WTC11 (cell line): ENCODE measurements at regions of chr6 and their contacts with region 1.

Region 1: GRCh38 chr6:12911387-12911960 is 194.9 kb downstream of the PHACTR1 start:
- DNase-seq: no peak
- ATAC-seq: no peak; the same call in 1 of the 2 replicates
- H3K4me3 Mint-ChIP-seq: no peak overlapping the region
- H3K27ac Mint-ChIP-seq: no peak overlapping the region
- H3K4me1 Mint-ChIP-seq: peaks cover 26% of the 10 kb centered on the region
- H3K27me3 Mint-ChIP-seq: no peaks in the 10 kb centered on the region
- CTCF ChIP-seq: no peak

Region 2: GRCh38 chr6:12637960-12638641 is 273.4 kb before region 1 on chr6:
- CTCF ChIA-PET with region 1: interaction called, 15 read pairs
- POLR2A ChIA-PET with region 1: no interaction called
- DNase-seq: peak; percentile 79
- ATAC-seq: peak; percentile 93
- H3K4me3 Mint-ChIP-seq: no peak overlapping the region
- H3K27ac Mint-ChIP-seq: no peak overlapping the region
- H3K4me1 Mint-ChIP-seq: peaks cover 3% of the 10 kb centered on the region; the same call in 1 of the 2 replicates
- H3K27me3 Mint-ChIP-seq: no peaks in the 10 kb centered on the region; the same call in 1 of the 2 replicates
- CTCF ChIP-seq: peak; percentile 89

Region 3: DNA sequence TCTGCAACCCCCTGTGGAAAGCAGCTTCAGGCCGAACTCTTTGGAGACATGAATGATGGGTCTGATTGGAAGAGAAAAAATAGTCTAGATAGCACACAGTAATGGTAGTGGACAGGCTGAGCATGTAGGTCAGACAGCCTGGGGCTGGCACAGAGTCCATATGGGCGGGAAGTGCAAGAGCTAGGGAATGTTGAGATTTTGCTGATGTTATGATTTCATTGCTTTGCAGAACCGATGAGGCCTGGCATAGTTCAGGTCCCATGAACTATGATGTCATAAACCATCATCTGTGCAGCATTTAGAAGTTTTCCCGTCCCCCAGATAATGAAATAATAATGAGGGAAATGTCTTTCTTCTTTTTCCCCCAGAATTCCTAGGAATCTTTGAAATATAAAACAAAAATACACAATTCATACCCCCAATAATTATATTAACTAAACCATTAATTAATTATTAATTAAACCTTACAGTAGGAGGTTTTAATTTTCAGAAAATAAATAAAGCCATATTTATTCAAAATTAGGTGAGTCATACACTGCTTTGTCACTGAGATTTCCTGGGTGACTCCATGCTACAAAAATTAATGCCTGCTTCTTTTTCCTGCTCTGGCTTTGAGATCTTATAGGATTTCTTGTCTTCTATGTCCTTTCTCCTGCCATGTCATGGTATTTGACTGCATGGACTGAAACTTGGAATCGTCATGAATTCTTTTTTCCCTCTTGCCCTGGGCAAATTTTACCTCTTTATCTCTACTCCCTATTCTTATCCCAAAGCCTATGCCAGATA is 61.9 kb before region 1 on chr6:
- CTCF ChIA-PET with region 1: no interaction called
- POLR2A ChIA-PET with region 1: no interaction called
- DNase-seq: no peak
- ATAC-seq: no peak
- H3K4me3 Mint-ChIP-seq: no peak overlapping the region
- H3K27ac Mint-ChIP-seq: no peak overlapping the region
- H3K4me1 Mint-ChIP-seq: peaks cover 42% of the 10 kb centered on the region
- H3K27me3 Mint-ChIP-seq: no peaks in the 10 kb centered on the region
- CTCF ChIP-seq: no peak

Region 4: DNA sequence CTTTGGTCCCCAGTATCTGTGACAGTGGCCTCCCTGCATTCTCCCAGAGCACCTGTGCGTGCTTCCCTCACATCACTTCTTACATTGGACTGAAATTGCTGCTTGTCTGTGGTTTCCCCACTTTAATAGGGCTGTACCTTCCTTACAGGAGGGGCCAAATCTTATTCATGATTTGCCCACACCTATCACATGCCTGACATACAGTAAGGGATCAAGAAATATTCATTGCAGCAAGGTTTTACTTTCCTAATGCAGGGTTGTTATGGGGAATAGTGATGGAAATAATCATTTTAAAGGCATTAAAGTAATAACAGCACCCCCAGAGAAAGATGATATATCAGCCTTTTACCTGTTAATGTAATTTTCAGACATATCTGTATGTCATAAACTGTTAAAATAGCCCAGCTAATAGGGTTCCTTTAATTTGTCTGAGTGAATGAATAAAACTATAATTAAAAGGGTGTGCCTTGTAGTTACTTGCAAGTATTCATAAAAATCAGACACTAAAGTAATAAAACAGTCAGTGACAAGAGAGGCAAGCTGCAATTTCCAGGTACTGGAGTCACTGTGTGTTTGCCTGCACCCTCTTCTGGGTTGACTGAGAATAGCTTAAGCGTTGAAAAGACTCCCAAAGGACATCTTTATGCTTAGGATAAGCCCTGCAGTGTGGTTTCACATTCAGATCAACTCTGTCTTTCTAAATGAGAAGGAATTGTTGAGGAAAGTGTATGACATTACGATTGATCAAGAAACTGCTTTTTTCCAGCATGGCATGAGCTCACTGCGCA is 12.2 kb before region 1 on chr6:
- CTCF ChIA-PET with region 1: interaction called, 15 read pairs
- POLR2A ChIA-PET with region 1: no interaction called
- DNase-seq: no peak
- ATAC-seq: no peak
- H3K4me3 Mint-ChIP-seq: no peak overlapping the region
- H3K27ac Mint-ChIP-seq: no peak overlapping the region
- H3K4me1 Mint-ChIP-seq: no peaks in the 10 kb centered on the region
- H3K27me3 Mint-ChIP-seq: peaks cover 3% of the 10 kb centered on the region; the same call in 1 of the 2 replicates
- CTCF ChIP-seq: no peak

Region 5: DNA sequence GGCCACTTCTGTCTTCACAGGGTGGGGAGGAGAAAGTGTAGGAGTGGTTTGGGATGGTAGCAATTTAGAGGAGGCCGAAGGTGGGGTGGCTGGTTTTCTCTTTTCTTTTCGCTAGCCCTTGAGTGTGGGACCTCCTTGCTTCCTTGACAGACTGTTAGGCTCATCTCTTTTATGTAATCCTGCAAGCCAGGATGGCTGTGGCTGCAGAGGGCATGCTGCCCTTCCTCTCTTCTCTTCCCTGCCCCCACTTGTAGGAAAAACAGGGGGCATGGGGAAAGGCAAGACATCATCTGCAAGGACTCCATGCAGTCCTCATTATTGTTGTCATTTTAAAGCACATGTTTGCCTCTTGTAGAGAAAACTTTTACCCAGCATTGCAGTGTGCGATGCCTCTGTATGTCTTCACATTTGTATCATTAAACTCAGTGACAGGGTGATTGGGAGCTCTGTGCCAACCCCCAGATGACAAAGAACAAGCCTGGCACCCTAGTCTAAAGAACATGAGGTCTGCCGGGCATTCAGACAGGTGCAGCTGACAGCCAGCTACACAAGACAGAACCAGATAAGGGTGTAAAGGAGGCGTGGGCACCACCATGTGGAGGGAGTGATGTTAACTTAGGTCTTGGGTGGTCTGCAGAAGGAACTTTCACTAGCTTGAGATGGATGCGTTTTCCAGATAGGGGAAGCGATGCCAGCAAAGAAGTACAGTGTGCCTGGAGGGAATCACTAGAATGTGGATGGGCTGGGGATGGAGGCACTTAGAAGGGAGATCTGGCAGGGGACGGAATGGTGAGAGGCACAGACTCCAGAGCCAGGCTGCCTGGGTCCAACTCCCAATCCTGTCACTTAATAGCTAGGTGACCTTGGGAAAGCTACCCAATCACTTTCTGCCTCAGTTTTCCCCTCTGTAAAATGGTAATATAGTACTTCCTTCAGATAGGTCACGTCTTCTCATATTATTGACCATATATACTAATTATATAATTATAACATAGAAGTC is 209.3 kb after region 1 on chr6:
- CTCF ChIA-PET with region 1: interaction called, 14 read pairs
- POLR2A ChIA-PET with region 1: no interaction called
- DNase-seq: peak; percentile 27
- ATAC-seq: peak; percentile 73
- H3K4me3 Mint-ChIP-seq: no peak overlapping the region
- H3K27ac Mint-ChIP-seq: no peak overlapping the region
- H3K4me1 Mint-ChIP-seq: peaks cover 28% of the 10 kb centered on the region
- H3K27me3 Mint-ChIP-seq: no peaks in the 10 kb centered on the region
- CTCF ChIP-seq: 0 out of 2 replicates have a peak, but pooled peaks have one; percentile 9

Region 6: GRCh38 chr6:13277836-13278563 is 366.5 kb after region 1 on chr6:
- CTCF ChIA-PET with region 1: interaction called, 14 read pairs
- POLR2A ChIA-PET with region 1: no interaction called
- DNase-seq: peak; percentile 62
- ATAC-seq: peak; percentile 92
- H3K4me3 Mint-ChIP-seq: no peak overlapping the region
- H3K27ac Mint-ChIP-seq: no peak overlapping the region
- H3K4me1 Mint-ChIP-seq: peaks cover 17% of the 10 kb centered on the region
- H3K27me3 Mint-ChIP-seq: no peaks in the 10 kb centered on the region
- CTCF ChIP-seq: peak; percentile 20; the same call in 1 of the 2 replicates